A549 (cell line): ENCODE measurements at regions of chr5 and their contacts with region 1.

Region 1: DNA sequence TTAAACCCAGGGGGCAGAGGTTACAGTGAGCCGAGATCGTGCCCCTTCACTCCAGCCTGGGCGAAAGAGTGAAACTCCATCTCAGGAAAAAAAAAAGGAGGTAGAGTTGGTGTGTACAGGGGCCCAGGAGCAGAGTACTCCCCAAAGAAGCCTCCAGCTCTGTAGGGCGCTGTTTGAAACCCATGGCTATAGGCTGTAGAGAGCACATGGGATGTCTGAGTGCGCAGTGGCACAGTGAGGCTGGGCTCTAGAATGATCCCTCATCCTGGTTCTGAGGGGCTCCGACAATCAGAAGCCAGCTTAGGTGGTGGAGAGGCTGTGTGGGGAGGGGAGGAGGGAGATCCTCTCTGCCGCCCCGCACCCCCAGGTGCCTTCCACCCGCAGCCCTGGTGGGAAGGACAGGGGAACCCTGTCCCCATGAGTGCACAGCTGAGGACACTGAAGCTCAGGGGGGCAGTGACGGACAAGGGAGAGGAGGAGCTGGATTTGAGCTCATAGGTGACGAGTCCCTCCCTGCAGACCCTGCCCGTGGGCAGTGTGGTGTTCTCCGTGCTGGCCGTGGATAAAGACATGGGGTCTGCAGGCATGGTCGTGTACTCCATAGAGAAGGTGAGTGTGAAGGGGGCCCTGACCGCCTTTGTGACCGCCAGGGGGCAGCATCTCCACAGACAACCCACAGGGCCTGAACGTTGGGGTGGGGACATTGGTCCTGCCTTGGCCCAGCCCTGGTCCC is 24.6 kb downstream of the CDHR2 start:
- DNase-seq: peak; percentile 58 to 70
- ATAC-seq: peak; percentile 60 to 87; a peak in 5 of 6 replicates
- H3K4me3 ChIP-seq: no peak overlapping the region
- H3K27ac ChIP-seq: no peak overlapping the region
- H3K4me1 ChIP-seq: 0 out of 3 replicates have a peak, but pooled peaks cover 6% of the 10 kb centered on the region
- CTCF ChIP-seq: peak; percentile 75
- EP300 ChIP-seq: no peak
- POLR2A ChIP-seq: no peak
- RAD21 ChIP-seq: peak; percentile 80

Region 2: GRCh38 chr5:176373100-176373818 is 200.5 kb before region 1 on chr5:
- CTCF ChIA-PET with region 1: no interaction called
- POLR2A ChIA-PET with region 1: no interaction called
- DNase-seq: no peak
- ATAC-seq: no peak
- H3K4me3 ChIP-seq: no peak overlapping the region
- H3K27ac ChIP-seq: no peak overlapping the region
- H3K4me1 ChIP-seq: no peaks in the 10 kb centered on the region
- CTCF ChIP-seq: no peak
- EP300 ChIP-seq: no peak
- POLR2A ChIP-seq: no peak
- RAD21 ChIP-seq: no peak

Region 3: GRCh38 chr5:176405656-176406427 is 167.9 kb before region 1 on chr5:
- CTCF ChIA-PET with region 1: interaction called, 15 read pairs
- POLR2A ChIA-PET with region 1: no interaction called
- DNase-seq: peak in 1 of 2 experiments; percentile 44
- ATAC-seq: peak; percentile 70 to 80; a peak in 5 of 6 replicates
- H3K4me3 ChIP-seq: no peak overlapping the region
- H3K27ac ChIP-seq: no peak overlapping the region
- H3K4me1 ChIP-seq: peaks cover 9% of the 10 kb centered on the region; the same call in 2 of the 3 replicates
- CTCF ChIP-seq: 0 out of 3 replicates have a peak, but pooled peaks have one; percentile 16
- EP300 ChIP-seq: no peak
- POLR2A ChIP-seq: no peak
- RAD21 ChIP-seq: peak in 1 of 2 experiments; percentile 16; a peak in 1 of 5 replicates

Region 4: DNA sequence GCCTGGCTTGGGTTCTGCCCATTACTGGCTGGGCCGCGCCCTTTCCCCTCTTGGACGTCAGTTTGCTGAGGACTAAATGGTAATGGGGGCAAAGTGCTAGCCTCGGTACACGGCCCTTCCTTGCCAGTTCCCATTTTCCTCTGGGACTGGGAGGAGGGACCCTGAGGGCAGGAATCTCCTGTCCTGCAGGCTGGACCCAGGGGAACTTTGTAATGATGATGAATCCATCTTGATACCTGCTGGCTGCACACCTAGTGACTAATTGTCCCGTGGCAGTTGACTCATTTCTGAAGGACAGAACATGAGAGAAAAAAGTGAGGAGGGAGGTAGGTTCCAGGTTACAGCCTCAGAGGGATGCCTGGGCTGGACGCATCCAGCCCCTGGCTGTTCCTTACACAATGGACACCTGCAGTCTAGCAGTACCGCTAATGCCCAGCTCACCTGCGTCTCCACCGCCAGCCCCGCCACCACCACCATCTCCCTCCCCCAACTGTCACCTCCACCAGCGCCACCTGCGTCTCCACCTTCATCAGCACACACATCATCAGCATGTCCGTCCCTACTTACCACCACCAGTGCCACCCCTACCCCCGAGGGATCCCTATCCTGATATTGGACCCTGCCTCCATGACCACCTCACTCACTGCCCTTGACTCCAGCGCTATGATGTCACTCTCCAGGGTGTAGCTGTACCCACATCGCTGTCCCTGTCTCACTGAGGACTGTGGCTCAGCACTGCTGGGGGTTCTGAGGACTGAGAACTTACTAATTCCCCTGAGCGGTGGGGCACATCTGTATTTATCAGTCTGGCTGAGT is 20.3 kb before region 1 on chr5:
- CTCF ChIA-PET with region 1: interaction called, 18 read pairs
- POLR2A ChIA-PET with region 1: no interaction called
- DNase-seq: peak in 1 of 2 experiments; percentile 48
- ATAC-seq: peak; percentile 39 to 50
- H3K4me3 ChIP-seq: no peak overlapping the region
- H3K27ac ChIP-seq: peak overlapping the region; percentile 51 to 52; a peak in 5 of 6 replicates
- H3K4me1 ChIP-seq: peaks cover 21% of the 10 kb centered on the region; the same call in 2 of the 3 replicates
- CTCF ChIP-seq: no peak
- EP300 ChIP-seq: no peak
- POLR2A ChIP-seq: no peak
- RAD21 ChIP-seq: no peak

Region 5: DNA sequence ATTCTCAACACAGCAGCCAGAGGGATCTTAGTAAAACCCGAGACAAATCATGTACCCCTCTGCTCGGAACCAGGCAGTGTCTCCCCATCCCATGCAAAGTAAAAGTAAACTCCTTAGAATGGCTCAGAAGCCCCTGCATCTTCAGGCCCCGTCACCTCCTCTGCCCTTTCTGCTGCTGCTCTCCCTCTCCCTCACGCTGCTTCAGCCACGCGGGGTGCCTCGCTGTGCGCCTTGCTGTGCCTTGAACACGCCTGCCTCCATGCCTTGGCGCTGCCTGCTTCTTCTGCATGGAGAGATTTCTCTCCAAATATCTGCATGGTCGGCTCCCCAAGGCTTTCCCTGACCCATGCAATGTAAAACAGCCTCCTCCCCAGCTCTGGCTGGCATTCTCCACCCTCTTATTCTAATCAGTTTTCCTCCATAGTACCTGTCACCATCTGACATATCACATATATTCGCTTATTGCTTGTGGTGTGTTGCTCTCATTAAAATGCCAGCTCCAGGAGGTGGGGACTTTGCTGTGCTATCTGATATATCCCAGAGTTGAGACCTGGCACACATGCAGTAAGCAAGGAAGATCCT is 28.3 kb after region 1 on chr5:
- CTCF ChIA-PET with region 1: interaction called, 11 read pairs
- POLR2A ChIA-PET with region 1: no interaction called
- DNase-seq: no peak
- ATAC-seq: no peak
- H3K4me3 ChIP-seq: no peak overlapping the region
- H3K27ac ChIP-seq: no peak overlapping the region
- H3K4me1 ChIP-seq: 0 out of 3 replicates have a peak, but pooled peaks cover 7% of the 10 kb centered on the region
- CTCF ChIP-seq: no peak
- EP300 ChIP-seq: no peak
- POLR2A ChIP-seq: no peak
- RAD21 ChIP-seq: no peak

Region 6: GRCh38 chr5:176647030-176647866 is 73.5 kb after region 1 on chr5 and contains the start of gene TSPAN17:
- CTCF ChIA-PET with region 1: interaction called, 12 read pairs
- POLR2A ChIA-PET with region 1: interaction called, 8 read pairs
- DNase-seq: peak; percentile 92 to 98
- ATAC-seq: peak; percentile 82 to 95
- H3K4me3 ChIP-seq: peak within 1 kb of the TSS; percentile 66
- H3K27ac ChIP-seq: peak within 1 kb of the TSS; percentile 86 to 94
- H3K4me1 ChIP-seq: peaks cover 14% of the 10 kb centered on the region
- CTCF ChIP-seq: peak; percentile 30; the same call in 2 of the 3 replicates
- EP300 ChIP-seq: no peak
- POLR2A ChIP-seq: peak; percentile 97
- RAD21 ChIP-seq: peak; percentile 32 to 66
- polyA plus RNA-seq, gene TSPAN17: 33.7 and 35.6 TPM in 2 replicates

Region 7: GRCh38 chr5:176675675-176676360 is 102.1 kb after region 1 on chr5:
- CTCF ChIA-PET with region 1: no interaction called
- POLR2A ChIA-PET with region 1: no interaction called
- DNase-seq: peak; percentile 56 to 60
- ATAC-seq: peak; percentile 44 to 79; a peak in 5 of 6 replicates
- H3K4me3 ChIP-seq: no peak overlapping the region
- H3K27ac ChIP-seq: peak overlapping the region; percentile 6 to 56; a peak in 3 of 6 replicates
- H3K4me1 ChIP-seq: peaks cover 17% of the 10 kb centered on the region
- CTCF ChIP-seq: no peak
- EP300 ChIP-seq: no peak
- POLR2A ChIP-seq: no peak
- RAD21 ChIP-seq: no peak